ENCODE measurements at regions of chr6 and their contacts with region 1.

Region 1: GRCh38 chr6:30396833-30397479 is 52.0 kb downstream of the RPP21 start:
- DNase-seq: peak; percentile 76 to 85
- H3K4me3 ChIP-seq: no peak overlapping the region
- H3K4me3 Mint-ChIP-seq: no peak overlapping the region
- H3K27ac Mint-ChIP-seq: no peak overlapping the region
- H3K4me1 ChIP-seq: no peaks in the 10 kb centered on the region
- H3K4me1 Mint-ChIP-seq: no peaks in the 10 kb centered on the region
- H3K27me3 ChIP-seq: no peaks in the 10 kb centered on the region
- H3K27me3 Mint-ChIP-seq: peaks cover 22% of the 10 kb centered on the region
- CTCF ChIP-seq: peak; percentile 86 to 92

Region 2: DNA sequence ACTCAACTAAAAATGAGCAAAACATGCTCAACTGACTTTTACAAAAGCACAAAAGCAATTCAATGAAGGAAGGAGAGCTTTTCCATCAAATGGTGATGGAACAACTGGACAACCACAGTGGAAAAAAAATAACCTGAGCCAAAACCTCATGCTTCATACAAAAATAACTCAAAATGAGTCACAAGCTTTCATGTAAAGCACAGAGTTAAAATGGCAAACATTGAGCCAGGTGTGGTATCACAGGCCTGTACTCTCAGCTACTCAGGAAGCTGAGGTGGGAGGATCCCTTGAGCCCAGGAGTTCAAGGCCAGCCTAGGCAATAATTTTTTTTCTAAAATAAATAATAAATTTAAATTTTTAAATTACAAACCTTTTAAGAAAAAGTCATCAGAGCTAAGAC is 587.7 kb before region 1 on chr6:
- CTCF ChIA-PET with region 1: no interaction called
- POLR2A ChIA-PET with region 1: no interaction called
- intact Hi-C with region 1: no loop called
- DNase-seq: no peak
- H3K4me3 ChIP-seq: no peak overlapping the region
- H3K4me3 Mint-ChIP-seq: no peak overlapping the region
- H3K27ac Mint-ChIP-seq: no peak overlapping the region
- H3K4me1 ChIP-seq: no peaks in the 10 kb centered on the region
- H3K4me1 Mint-ChIP-seq: no peaks in the 10 kb centered on the region
- H3K27me3 ChIP-seq: 0 out of 2 replicates have a peak, but pooled peaks cover 1% of the 10 kb centered on the region
- H3K27me3 Mint-ChIP-seq: peaks cover 11% of the 10 kb centered on the region
- CTCF ChIP-seq: no peak

Region 3: DNA sequence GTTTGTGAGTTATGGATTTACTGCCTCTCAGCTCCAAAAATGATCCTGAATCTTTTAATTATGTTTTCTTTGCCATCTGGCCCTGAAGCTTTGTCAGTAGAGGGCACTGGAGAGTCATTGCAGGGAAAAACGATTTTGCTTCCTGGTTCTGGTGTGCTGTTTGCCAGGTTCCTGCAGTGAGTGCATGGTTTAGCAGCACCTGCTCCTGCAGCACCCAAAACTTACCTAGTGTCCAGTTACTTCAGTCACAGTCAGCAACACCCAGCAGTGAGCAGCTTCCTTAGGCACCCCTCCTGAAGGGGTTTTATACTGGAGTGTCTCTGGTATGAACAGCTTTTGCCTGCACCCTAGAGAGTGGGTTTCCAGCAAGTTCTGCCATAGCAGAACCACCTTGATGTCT is 177.7 kb before region 1 on chr6:
- CTCF ChIA-PET with region 1: interaction called, 4 read pairs
- POLR2A ChIA-PET with region 1: no interaction called
- intact Hi-C with region 1: loop called (anchors 5 kb)
- DNase-seq: peak in 1 of 2 experiments; percentile 57
- H3K4me3 ChIP-seq: no peak overlapping the region
- H3K4me3 Mint-ChIP-seq: no peak overlapping the region
- H3K27ac Mint-ChIP-seq: no peak overlapping the region
- H3K4me1 ChIP-seq: 0 out of 2 replicates have a peak, but pooled peaks cover 3% of the 10 kb centered on the region
- H3K4me1 Mint-ChIP-seq: no peaks in the 10 kb centered on the region
- H3K27me3 ChIP-seq: no peaks in the 10 kb centered on the region
- H3K27me3 Mint-ChIP-seq: no peaks in the 10 kb centered on the region
- CTCF ChIP-seq: peak; percentile 70 to 88

Region 4: DNA sequence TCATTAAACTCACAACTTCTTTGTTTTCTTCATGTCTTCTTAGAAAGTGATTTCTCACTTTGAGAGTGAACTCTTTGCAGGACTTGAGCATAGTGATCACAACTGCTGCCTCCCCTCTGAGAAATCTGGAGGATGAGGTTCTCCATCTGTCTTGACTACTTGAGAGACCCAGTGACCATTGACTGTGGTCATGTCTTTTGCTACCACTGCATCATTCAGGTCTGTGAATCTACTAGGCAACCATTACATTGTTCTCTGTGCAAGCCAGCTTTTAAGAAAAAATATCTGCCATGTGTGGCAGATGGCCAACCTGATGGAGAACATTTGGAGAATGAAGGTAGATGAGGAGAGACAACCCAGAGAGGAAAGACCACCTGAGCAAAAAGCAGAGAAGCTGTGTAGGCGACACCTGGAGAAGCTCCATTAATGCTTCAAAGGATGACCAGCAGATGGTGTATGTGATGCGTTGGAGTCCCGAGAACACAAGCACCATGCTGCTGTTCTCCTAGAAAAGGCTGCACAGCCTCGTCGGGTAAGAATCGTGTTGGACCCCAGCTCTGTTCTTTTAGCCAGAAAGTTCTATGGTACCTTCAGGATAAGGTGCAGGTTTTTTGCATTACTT is 158.7 kb before region 1 on chr6:
- CTCF ChIA-PET with region 1: interaction called, 14 read pairs
- POLR2A ChIA-PET with region 1: no interaction called
- intact Hi-C with region 1: loop called (anchors 1 kb)
- DNase-seq: peak; percentile 40 to 51
- H3K4me3 ChIP-seq: no peak overlapping the region
- H3K4me3 Mint-ChIP-seq: no peak overlapping the region
- H3K27ac Mint-ChIP-seq: no peak overlapping the region
- H3K4me1 ChIP-seq: no peaks in the 10 kb centered on the region
- H3K4me1 Mint-ChIP-seq: no peaks in the 10 kb centered on the region
- H3K27me3 ChIP-seq: no peaks in the 10 kb centered on the region
- H3K27me3 Mint-ChIP-seq: peaks cover 20% of the 10 kb centered on the region
- CTCF ChIP-seq: peak; percentile 50 to 67

Region 5: GRCh38 chr6:30357678-30358540 is 39.0 kb before region 1 on chr6:
- CTCF ChIA-PET with region 1: interaction called, 5 read pairs
- POLR2A ChIA-PET with region 1: no interaction called
- intact Hi-C with region 1: loop called (anchors 2 kb)
- DNase-seq: peak; percentile 40 to 49
- H3K4me3 ChIP-seq: no peak overlapping the region
- H3K4me3 Mint-ChIP-seq: no peak overlapping the region
- H3K27ac Mint-ChIP-seq: no peak overlapping the region
- H3K4me1 ChIP-seq: no peaks in the 10 kb centered on the region
- H3K4me1 Mint-ChIP-seq: no peaks in the 10 kb centered on the region
- H3K27me3 ChIP-seq: no peaks in the 10 kb centered on the region; the same call in 1 of the 2 replicates
- H3K27me3 Mint-ChIP-seq: peaks cover 22% of the 10 kb centered on the region
- CTCF ChIP-seq: peak; percentile 65 to 69

Region 6: DNA sequence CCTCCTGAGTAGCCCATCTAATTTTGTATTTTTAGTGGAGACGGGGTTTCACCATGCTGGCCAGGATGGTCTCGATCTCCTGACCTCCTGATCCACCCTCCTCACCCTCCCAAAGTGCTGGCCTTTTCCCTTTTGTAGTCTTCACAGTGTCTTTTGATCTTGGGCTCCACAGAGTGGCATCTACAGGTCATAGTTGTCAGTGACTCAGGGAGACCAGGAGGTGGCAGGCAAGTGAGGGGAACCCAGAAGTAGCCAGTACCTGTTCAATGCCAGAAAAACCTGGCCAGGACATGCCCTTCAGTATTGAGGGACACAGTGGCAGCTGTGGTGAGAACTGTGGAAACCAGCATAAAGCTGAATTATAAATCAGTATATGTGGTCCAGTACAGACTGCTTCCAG is 32.4 kb before region 1 on chr6:
- CTCF ChIA-PET with region 1: no interaction called
- POLR2A ChIA-PET with region 1: no interaction called
- intact Hi-C with region 1: loop called (anchors 2 kb)
- DNase-seq: peak in 1 of 2 experiments; percentile 15
- H3K4me3 ChIP-seq: no peak overlapping the region
- H3K4me3 Mint-ChIP-seq: no peak overlapping the region
- H3K27ac Mint-ChIP-seq: no peak overlapping the region
- H3K4me1 ChIP-seq: no peaks in the 10 kb centered on the region
- H3K4me1 Mint-ChIP-seq: no peaks in the 10 kb centered on the region
- H3K27me3 ChIP-seq: no peaks in the 10 kb centered on the region; the same call in 1 of the 2 replicates
- H3K27me3 Mint-ChIP-seq: peaks cover 31% of the 10 kb centered on the region
- CTCF ChIP-seq: peak; percentile 23 to 44

Measured in Caco-2 (cell line).